ENCODE measurements at regions of chr2 and their contacts with region 1.

Region 1: DNA sequence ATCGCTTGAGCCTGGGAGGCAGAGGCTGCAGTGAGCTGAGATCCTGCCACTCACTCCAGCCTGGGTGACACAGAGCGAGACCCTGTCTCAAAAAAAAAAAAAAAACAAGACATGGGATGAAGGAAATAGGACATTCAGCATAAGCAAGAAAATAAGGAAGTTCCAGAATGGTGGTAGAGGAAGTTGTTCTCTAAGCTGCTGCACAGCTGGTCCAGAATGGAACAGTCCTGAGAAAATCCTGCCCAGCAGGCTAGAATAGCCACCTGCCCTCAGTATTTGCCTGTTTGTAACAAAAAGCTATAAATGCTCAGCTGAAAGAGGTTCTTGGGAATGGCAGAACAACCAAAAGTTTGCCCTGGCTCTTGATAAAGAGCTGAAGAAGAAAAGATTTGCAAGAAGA is 11.1 kb upstream of the MAPRE3 start:
- DNase-seq: no peak
- H3K4me3 ChIP-seq: no peak overlapping the region
- H3K4me3 Mint-ChIP-seq: no peak overlapping the region
- H3K27ac Mint-ChIP-seq: no peak overlapping the region
- H3K4me1 ChIP-seq: 0 out of 2 replicates have a peak, but pooled peaks cover under 1% of the 10 kb centered on the region
- H3K4me1 Mint-ChIP-seq: no peaks in the 10 kb centered on the region
- H3K27me3 ChIP-seq: no peaks in the 10 kb centered on the region
- H3K27me3 Mint-ChIP-seq: peaks cover 25% of the 10 kb centered on the region
- CTCF ChIP-seq: no peak

Region 2: GRCh38 chr2:26982102-26982742 is 22.9 kb after region 1 on chr2:
- CTCF ChIA-PET with region 1: interaction called, 13 read pairs
- POLR2A ChIA-PET with region 1: no interaction called
- intact Hi-C with region 1: no loop called
- DNase-seq: peak in 1 of 2 experiments; percentile 64
- H3K4me3 ChIP-seq: no peak overlapping the region
- H3K4me3 Mint-ChIP-seq: no peak overlapping the region
- H3K27ac Mint-ChIP-seq: no peak overlapping the region
- H3K4me1 ChIP-seq: 0 out of 2 replicates have a peak, but pooled peaks cover 3% of the 10 kb centered on the region
- H3K4me1 Mint-ChIP-seq: no peaks in the 10 kb centered on the region
- H3K27me3 ChIP-seq: no peaks in the 10 kb centered on the region
- H3K27me3 Mint-ChIP-seq: peaks cover 4% of the 10 kb centered on the region
- CTCF ChIP-seq: peak; percentile 42

Region 3: DNA sequence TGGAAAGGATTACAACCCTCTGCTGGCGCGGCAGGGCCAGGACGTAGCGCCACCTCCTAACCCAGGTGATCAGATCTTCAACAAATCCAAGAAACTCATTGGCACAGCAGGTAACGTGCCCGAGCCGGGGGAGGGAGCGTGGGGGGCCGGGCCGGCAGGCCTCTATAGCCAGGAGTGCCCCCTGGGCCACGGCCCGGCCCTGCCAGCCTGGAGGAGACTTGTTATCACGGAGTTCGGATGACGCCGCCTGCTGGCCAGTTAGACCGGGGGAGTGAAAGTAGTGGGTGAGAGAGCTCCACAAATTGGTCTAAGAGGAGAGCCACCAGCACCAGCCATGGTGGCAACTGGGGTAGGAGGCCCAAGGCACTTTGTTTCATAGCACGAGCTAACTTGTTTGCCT is 64.9 kb after region 1 on chr2:
- CTCF ChIA-PET with region 1: interaction called, 10 read pairs
- POLR2A ChIA-PET with region 1: no interaction called
- intact Hi-C with region 1: no loop called
- DNase-seq: no peak
- H3K4me3 ChIP-seq: no peak overlapping the region
- H3K4me3 Mint-ChIP-seq: no peak overlapping the region
- H3K27ac Mint-ChIP-seq: no peak overlapping the region
- H3K4me1 ChIP-seq: peaks cover 29% of the 10 kb centered on the region
- H3K4me1 Mint-ChIP-seq: peaks cover 26% of the 10 kb centered on the region
- H3K27me3 ChIP-seq: no peaks in the 10 kb centered on the region
- H3K27me3 Mint-ChIP-seq: no peaks in the 10 kb centered on the region
- CTCF ChIP-seq: no peak

Region 4: GRCh38 chr2:27086090-27086723 is 126.9 kb after region 1 on chr2:
- CTCF ChIA-PET with region 1: interaction called, 6 read pairs
- POLR2A ChIA-PET with region 1: no interaction called
- intact Hi-C with region 1: loop called (anchors 1 kb)
- DNase-seq: peak; percentile 94 to 99
- H3K4me3 ChIP-seq: peak overlapping the region; percentile 86
- H3K4me3 Mint-ChIP-seq: peak overlapping the region; percentile 89
- H3K27ac Mint-ChIP-seq: peak overlapping the region; percentile 66
- H3K4me1 ChIP-seq: peaks cover 7% of the 10 kb centered on the region
- H3K4me1 Mint-ChIP-seq: peaks cover 14% of the 10 kb centered on the region
- H3K27me3 ChIP-seq: no peaks in the 10 kb centered on the region
- H3K27me3 Mint-ChIP-seq: no peaks in the 10 kb centered on the region
- CTCF ChIP-seq: peak; percentile 74 to 88